ENCODE measurements at regions of chr11 and their contacts with region 1.

Region 1: GRCh38 chr11:9757809-9758636 is 94.1 kb downstream of the SWAP70 start:
- DNase-seq: peak; percentile 83 to 92
- ATAC-seq: peak; percentile 37 to 79
- H3K4me3 ChIP-seq: peak overlapping the region; percentile 70
- H3K27ac ChIP-seq: peak overlapping the region; percentile 95 to 98
- H3K4me1 ChIP-seq: peaks cover 43% of the 10 kb centered on the region
- CTCF ChIP-seq: peak; percentile 92
- EP300 ChIP-seq: no peak
- POLR2A ChIP-seq: peak; percentile 82
- RAD21 ChIP-seq: peak; percentile 70 to 99; a peak in 4 of 5 replicates

Region 2: DNA sequence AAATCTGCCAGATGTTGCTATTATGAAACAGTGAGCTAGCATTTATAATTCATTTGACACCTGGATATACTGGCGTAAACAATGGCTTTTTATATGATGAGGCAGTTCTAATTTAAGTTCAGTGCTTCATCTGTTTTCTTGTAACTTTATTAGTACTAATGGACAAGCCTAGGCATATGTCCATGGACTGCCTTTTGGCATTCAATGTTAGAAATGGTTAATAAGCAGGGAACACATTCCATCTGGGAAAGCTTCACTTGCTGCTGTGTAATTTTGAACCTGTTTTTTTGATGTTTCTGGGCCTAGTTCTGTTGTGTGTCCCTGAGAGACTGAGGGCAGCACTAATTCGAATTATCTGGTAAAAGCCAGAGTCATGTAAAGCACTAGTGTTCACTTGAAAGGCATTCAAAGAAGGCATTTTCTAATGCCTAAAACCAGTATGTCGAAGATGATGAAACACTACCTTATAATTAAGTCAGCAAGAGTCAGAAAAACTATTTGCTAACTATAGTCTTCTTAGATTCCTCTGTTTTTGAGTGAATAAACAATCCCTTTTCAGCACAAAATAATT is 44.4 kb after region 1 on chr11:
- CTCF ChIA-PET with region 1: interaction called, 12 read pairs
- POLR2A ChIA-PET with region 1: no interaction called
- DNase-seq: no peak
- ATAC-seq: peak in 1 of 2 experiments; percentile 33; a peak in 2 of 6 replicates
- H3K4me3 ChIP-seq: no peak overlapping the region
- H3K27ac ChIP-seq: peak overlapping the region; percentile 75 to 86
- H3K4me1 ChIP-seq: peaks cover 42% of the 10 kb centered on the region
- CTCF ChIP-seq: no peak
- EP300 ChIP-seq: no peak
- POLR2A ChIP-seq: no peak
- RAD21 ChIP-seq: no peak

Region 3: GRCh38 chr11:9972989-9973388 is 215.0 kb after region 1 on chr11:
- CTCF ChIA-PET with region 1: interaction called, 53 read pairs
- POLR2A ChIA-PET with region 1: interaction called, 3 read pairs
- DNase-seq: peak; percentile 63
- ATAC-seq: peak; percentile 56 to 73; a peak in 4 of 6 replicates
- H3K4me3 ChIP-seq: no peak overlapping the region
- H3K27ac ChIP-seq: peak overlapping the region; percentile 12 to 56; a peak in 3 of 6 replicates
- H3K4me1 ChIP-seq: peaks cover 39% of the 10 kb centered on the region
- CTCF ChIP-seq: peak; percentile 89
- EP300 ChIP-seq: no peak
- POLR2A ChIP-seq: no peak
- RAD21 ChIP-seq: peak; percentile 89 to 91

Region 4: DNA sequence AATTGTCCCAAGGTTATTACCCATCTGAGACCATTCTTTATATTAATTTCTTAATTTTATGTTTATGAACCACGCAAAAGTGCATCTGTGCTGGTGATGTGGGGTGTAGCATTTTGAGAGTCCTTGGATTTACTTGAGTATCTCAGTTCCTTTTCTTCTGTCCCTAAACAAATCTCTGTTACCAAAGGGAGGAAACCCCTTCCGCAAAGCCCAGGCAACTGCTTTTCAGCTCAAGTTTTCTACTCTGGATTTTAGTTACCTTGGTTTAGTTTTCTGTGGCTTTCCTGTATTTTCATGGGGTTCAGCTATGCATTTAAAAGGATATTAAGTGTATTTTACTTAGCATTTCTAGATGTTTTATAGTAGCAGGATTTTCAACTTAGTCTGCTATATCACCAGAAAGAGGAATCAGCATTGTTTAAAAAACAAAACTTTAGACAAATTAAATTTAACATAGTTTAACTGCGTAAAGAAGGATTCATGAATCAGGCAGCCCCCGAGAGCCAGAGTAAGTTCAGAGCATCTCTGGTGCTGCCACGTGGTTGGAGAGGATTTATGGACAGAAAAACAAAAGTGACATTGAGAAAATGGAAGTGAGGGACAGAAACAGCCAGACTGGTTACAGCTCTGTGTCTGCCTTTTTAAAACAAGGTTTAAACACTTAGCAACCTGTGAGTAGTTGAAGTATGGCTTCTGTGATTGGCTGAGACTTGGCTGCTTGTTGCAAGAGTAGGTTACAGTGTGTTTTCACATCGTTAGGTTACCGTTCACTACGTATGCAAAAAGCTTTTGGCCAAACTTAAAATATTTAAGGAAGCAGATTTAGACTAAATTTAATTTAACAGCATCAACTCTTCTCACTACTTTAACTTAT is 556.4 kb after region 1 on chr11:
- CTCF ChIA-PET with region 1: interaction called, 106 read pairs
- POLR2A ChIA-PET with region 1: interaction called, 28 read pairs
- DNase-seq: peak in 1 of 2 experiments; percentile 87
- ATAC-seq: peak; percentile 85 to 89
- H3K4me3 ChIP-seq: no peak overlapping the region
- H3K27ac ChIP-seq: peak overlapping the region; percentile 15 to 60; a peak in 4 of 6 replicates
- H3K4me1 ChIP-seq: peaks cover 20% of the 10 kb centered on the region
- CTCF ChIP-seq: no peak
- EP300 ChIP-seq: no peak
- POLR2A ChIP-seq: no peak
- RAD21 ChIP-seq: no peak